ENCODE measurements at regions of chr14 and their contacts with region 1.

Region 1: DNA sequence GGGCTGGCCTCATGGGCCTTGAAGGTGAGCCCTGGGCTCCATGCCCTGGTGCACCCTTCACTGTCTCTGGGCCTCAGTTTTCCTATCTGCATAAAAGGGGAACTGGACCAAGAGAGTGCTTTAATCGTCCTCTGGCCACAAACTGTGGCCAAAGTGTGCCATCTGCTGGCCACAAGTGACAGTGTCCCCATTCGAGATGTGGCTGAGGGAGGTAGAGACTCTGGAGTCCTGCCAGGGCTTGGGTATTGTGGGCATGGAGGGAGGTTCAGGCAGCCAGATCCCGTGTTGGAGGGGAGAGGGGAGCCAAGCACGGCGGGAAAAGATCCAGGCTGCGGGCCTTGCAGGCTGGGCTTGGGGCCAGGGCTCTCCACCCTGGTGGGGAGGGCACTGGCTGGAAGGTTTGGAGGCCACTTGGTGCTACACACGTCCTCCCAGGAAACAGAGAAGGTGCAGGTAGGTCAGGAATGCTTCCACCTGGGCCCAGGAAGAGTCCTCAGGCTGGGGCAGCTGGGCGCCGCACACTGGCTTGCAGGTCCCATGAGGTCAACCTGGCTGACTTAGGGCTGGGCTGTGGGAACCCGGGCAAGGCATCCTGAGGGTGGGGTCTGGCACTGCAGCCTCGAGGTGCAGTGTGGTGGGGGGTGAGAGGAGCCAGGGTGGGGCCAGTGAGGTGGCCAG is 7.3 kb upstream of the KIF26A start:
- DNase-seq: peak; percentile 47 to 69 (median 56)
- H3K4me3 ChIP-seq: no peak overlapping the region
- H3K27ac ChIP-seq: no peak overlapping the region
- H3K4me1 ChIP-seq: peaks cover 0 to 12% (median 7%) of the 10 kb centered on the region in 4 experiments
- H3K27me3 ChIP-seq: peaks cover 0 to 51% (median 23%) of the 10 kb centered on the region in 5 experiments

Region 2: GRCh38 chr14:103730490-103731035 is 400.6 kb before region 1 on chr14:
- CTCF ChIA-PET with region 1: no interaction called
- POLR2A ChIA-PET with region 1: no interaction called
- DNase-seq: peak; percentile 90 to 96 (median 92)
- H3K4me3 ChIP-seq: peak overlapping the region in 1 of 7 experiments; percentile 19
- H3K27ac ChIP-seq: no peak overlapping the region
- H3K4me1 ChIP-seq: peaks cover 0 to 36% (median 7%) of the 10 kb centered on the region in 4 experiments
- H3K27me3 ChIP-seq: no peaks in the 10 kb centered on the region

Region 3: DNA sequence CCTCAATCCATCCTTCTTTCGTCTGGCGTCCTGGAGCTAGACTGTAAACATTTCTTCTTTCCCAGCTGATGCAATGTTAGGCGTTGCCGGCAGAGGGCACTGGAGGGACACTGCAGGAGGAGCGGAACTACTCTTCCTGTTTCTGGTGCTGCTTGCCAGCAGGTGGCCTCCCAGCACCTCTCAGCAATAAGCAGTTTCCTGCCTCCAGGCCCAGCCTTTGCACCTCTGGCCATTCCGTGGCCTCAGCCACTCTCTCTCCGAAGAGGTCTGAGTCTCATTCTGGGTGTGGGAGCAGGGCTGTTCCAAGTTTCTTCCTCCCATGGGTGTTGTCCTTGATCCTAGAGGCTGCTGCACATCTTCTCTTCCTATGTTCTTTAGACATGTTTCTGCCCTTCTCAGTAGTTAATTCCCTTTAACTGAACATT is 53.1 kb before region 1 on chr14:
- CTCF ChIA-PET with region 1: interaction called, 16 read pairs
- POLR2A ChIA-PET with region 1: no interaction called
- DNase-seq: peak; percentile 88 to 93 (median 91)
- H3K4me3 ChIP-seq: no peak overlapping the region
- H3K27ac ChIP-seq: no peak overlapping the region
- H3K4me1 ChIP-seq: peaks cover 0 to 2% (median 1%) of the 10 kb centered on the region in 4 experiments
- H3K27me3 ChIP-seq: peaks cover 0 to 4% (median 0%) of the 10 kb centered on the region in 5 experiments

Region 4: DNA sequence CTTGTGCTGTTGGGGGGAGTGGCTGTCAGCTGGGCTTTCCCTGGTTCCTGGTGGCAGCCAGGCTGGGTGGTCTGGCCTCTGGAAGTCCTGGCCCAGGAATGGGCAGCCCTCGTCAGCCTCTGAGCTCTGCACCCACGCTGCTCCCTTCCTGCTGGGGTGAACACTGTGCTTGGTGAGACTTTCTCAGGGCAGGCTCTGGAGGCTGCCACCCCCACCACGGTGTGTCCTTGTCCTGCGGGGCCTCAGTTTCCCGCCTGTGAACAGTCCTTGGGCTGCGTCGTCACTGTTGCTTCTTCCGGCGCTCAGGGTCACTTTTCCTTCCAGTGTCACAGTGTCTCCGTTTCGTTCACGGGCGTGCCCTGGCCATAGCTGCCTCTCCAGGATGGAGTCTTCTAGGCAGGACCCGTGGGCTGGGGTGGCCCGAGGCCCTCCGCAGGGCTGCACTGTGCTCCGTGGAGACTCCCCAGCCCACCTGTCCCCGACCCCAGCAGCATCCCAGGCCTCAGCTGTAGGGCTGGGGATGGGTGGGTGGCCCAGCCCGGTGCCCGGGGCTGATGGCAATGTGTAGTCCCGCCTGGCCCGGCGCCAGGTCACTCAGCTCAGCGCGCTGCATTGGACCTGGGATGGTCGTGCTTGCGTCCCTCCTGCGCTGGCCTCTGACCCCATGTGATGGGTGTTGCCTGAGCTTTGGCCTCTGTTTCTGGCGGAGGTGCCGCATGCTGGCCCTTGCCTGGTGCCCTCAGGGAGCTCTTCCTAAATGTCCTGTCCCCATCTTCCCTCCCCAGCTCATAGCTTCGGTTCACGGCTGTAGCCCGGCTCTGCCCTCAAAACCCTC is 14.0 kb after region 1 on chr14:
- CTCF ChIA-PET with region 1: no interaction called
- POLR2A ChIA-PET with region 1: no interaction called
- DNase-seq: no peak
- H3K4me3 ChIP-seq: no peak overlapping the region
- H3K27ac ChIP-seq: no peak overlapping the region
- H3K4me1 ChIP-seq: peaks cover 0 to 6% (median 5%) of the 10 kb centered on the region in 4 experiments
- H3K27me3 ChIP-seq: peaks cover 0 to 11% (median 0%) of the 10 kb centered on the region in 5 experiments

Region 5: DNA sequence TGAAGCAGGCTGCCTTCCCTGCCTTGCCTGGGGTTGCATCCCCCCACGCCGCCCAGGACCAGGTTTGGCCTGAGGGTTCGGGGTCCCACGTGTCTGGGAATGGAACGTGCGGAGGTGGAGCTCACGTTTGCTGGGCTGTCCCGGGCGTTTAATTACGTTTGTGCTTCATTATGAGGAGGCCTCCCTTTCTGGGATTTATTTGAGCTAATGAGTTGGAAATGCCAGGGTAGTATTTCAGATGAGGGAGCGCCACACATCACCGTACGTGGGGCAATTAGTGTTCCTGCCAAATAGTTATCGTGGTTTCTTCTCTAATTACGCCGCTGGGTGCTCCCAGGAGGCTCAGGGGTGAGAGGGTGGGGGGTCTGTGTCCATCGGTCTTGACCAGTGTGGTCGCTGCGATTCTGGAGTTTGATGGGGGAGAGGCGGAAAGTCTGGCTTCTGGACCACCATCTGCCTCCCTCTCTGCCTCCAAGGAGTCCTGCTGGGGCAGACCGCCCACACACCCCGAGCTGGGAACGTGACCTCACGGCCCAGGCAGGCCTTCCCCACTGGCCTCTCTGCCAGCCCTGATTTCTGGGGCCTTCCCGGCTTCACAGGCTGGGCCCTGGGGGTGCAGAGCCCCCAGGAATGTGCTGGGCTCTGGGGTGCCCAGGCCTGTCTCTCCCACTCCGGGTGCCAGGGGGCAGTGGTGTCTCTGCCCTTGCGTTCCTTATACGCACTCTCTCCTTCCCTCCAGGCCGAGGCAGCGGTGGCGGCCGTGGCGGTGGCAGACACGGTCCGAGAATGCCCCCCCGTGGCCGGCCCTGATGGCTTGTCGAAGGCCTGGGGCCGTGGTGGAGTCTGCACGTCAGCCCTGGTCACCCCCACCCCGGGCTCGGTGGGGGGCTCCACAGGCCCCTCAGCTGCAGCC is 26.2 kb after region 1 on chr14:
- CTCF ChIA-PET with region 1: no interaction called
- POLR2A ChIA-PET with region 1: no interaction called
- DNase-seq: no peak
- H3K4me3 ChIP-seq: no peak overlapping the region
- H3K27ac ChIP-seq: no peak overlapping the region
- H3K4me1 ChIP-seq: peaks cover 0 to 3% (median 0%) of the 10 kb centered on the region in 4 experiments
- H3K27me3 ChIP-seq: no peaks in the 10 kb centered on the region

Region 6: GRCh38 chr14:104563742-104564615 is 432.9 kb after region 1 on chr14:
- CTCF ChIA-PET with region 1: interaction called, 11 read pairs
- POLR2A ChIA-PET with region 1: no interaction called
- DNase-seq: peak; percentile 70 to 90 (median 90)
- H3K4me3 ChIP-seq: peak overlapping the region in 2 of 7 experiments; percentile 26 to 54
- H3K27ac ChIP-seq: no peak overlapping the region
- H3K4me1 ChIP-seq: peaks cover 0 to 14% (median 7%) of the 10 kb centered on the region in 4 experiments
- H3K27me3 ChIP-seq: peaks cover 0 to 34% (median 2%) of the 10 kb centered on the region in 5 experiments

Measured in common myeloid progenitor, CD34-positive (primary cell).